WTC11 (cell line): ENCODE measurements at regions of chr1 and their contacts with region 1.

Region 1: GRCh38 chr1:182781841-182782586 is 7.6 kb upstream of the NPL start:
- DNase-seq: peak; percentile 79
- ATAC-seq: peak; percentile 79
- H3K4me3 Mint-ChIP-seq: no peak overlapping the region
- H3K27ac Mint-ChIP-seq: no peak overlapping the region
- H3K4me1 Mint-ChIP-seq: peaks cover 18% of the 10 kb centered on the region
- H3K27me3 Mint-ChIP-seq: peaks cover 4% of the 10 kb centered on the region
- CTCF ChIP-seq: peak; percentile 63

Region 2: GRCh38 chr1:182614796-182615454 is 167.1 kb before region 1 on chr1:
- CTCF ChIA-PET with region 1: interaction called, 84 read pairs
- POLR2A ChIA-PET with region 1: interaction called, 6 read pairs
- DNase-seq: peak; percentile 55
- ATAC-seq: peak; percentile 24
- H3K4me3 Mint-ChIP-seq: peak overlapping the region; percentile 71
- H3K27ac Mint-ChIP-seq: peak overlapping the region; percentile 86
- H3K4me1 Mint-ChIP-seq: peaks cover 81% of the 10 kb centered on the region
- H3K27me3 Mint-ChIP-seq: peaks cover 67% of the 10 kb centered on the region
- CTCF ChIP-seq: no peak

Region 3: DNA sequence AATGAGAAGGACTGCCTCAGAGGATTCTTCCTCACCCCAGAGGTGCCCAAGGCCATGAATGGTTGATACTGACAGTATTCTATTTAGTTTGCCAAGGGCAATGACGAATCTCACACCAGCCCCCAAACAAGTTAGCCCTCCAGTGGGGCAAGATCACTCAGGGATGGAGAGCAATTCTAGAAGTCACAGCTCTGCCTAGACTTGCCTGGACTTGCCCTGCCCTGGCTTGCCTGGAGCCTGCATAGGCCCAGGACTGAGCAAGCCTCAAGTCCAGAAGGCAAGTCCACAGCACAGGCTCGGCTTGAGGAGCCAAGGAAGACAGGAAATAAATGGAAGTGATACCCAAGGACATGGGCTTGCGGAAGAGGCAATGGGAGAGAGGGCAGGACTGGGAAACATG is 138.3 kb before region 1 on chr1:
- CTCF ChIA-PET with region 1: interaction called, 10 read pairs
- POLR2A ChIA-PET with region 1: no interaction called
- DNase-seq: no peak
- ATAC-seq: no peak
- H3K4me3 Mint-ChIP-seq: no peak overlapping the region
- H3K27ac Mint-ChIP-seq: peak overlapping the region; percentile 47; the same call in 1 of the 2 replicates
- H3K4me1 Mint-ChIP-seq: no peaks in the 10 kb centered on the region
- H3K27me3 Mint-ChIP-seq: no peaks in the 10 kb centered on the region; the same call in 1 of the 2 replicates
- CTCF ChIP-seq: no peak

Region 4: DNA sequence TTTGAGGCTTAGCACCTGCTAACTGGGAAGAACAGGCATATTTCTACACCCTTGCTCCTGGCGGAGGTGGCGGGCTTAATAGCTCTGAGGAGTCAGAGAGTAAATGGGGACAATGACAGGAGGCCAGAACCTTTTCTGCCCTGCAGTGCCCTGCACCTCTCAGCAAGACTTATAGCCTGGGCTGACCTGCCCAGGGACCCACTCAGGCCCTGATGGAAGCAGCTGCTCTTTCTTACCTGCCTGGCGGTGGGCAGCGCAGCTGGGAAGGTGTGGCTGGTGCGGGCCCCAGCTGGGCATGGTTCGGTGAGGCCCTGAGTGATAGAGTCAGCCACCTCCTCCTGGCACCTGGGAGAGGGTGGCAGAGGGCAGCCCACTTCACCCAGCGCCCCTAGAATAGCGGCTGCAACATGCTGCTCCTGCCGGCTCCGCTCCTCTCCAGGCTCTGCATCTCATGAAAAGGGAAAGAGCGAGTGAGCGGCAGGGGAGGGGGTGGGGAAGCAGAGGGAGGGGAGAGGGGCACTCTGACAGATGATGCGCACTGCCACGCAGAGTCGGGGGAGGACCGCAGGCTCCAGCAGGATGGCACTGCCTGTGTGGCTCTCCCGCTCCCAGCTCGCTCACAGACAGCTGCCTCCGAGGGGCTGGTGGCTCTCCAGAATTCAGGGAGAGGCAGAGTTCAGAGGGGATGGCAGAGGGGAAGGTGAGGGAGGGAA is 97.7 kb before region 1 on chr1 and contains the start of gene RGS8:
- CTCF ChIA-PET with region 1: interaction called, 13 read pairs
- POLR2A ChIA-PET with region 1: interaction called, 3 read pairs
- DNase-seq: no peak
- ATAC-seq: peak; percentile 77
- H3K4me3 Mint-ChIP-seq: no peak within 1 kb of the TSS
- H3K27ac Mint-ChIP-seq: no peak within 1 kb of the TSS
- H3K4me1 Mint-ChIP-seq: peaks cover 4% of the 10 kb centered on the region
- H3K27me3 Mint-ChIP-seq: peaks cover 19% of the 10 kb centered on the region
- CTCF ChIP-seq: no peak
- total RNA-seq, gene RGS8: 0.07 to 0.66 TPM (median 0.14 TPM) in 3 replicates

Region 5: DNA sequence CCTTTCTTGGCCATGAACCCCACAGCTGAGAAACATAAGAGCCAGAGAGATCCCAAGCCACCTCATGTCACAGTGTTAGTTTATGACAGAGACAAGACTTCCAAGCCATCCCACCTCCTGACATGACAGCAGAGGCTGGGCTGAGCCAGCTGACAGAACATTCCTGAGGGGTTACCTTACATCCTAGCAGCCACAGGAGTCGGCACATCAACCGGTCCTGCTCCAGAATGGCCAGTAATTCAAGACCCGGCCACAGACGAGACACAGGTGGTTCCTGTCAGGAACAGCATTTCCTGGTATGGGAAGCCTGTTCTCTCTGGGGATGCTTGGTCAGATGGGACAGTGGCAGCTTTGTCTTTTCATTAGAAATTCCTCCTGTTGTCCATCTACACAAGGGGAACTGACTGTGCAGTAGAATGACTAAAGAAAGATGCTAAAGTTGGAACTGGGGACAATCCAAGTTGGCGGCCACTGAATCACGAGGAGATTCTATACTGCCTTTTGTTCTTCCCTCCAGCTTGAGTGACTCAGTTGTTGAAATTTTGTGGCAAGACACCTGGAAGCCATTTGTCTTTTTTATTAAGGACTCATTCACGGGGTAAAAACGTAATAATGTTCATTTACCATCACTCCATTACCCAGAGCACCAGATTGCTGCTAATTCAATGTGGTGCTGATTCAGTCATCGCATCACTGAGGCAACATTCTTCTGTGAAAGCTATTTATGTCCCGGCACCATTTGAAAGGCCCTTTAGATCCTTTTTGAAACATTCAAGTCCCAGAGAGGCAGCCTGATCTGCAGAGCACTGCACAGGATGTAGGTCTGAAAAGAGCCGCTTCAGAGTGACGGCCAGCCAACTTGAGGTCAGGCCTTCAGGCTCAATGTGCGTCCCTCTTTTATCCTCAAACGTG is 29.7 kb before region 1 on chr1:
- CTCF ChIA-PET with region 1: interaction called, 27 read pairs
- POLR2A ChIA-PET with region 1: no interaction called
- DNase-seq: peak; percentile 13
- ATAC-seq: peak; percentile 47; the same call in 1 of the 2 replicates
- H3K4me3 Mint-ChIP-seq: no peak overlapping the region
- H3K27ac Mint-ChIP-seq: no peak overlapping the region
- H3K4me1 Mint-ChIP-seq: peaks cover 8% of the 10 kb centered on the region; the same call in 1 of the 2 replicates
- H3K27me3 Mint-ChIP-seq: no peaks in the 10 kb centered on the region; the same call in 1 of the 2 replicates
- CTCF ChIP-seq: no peak

Region 6: DNA sequence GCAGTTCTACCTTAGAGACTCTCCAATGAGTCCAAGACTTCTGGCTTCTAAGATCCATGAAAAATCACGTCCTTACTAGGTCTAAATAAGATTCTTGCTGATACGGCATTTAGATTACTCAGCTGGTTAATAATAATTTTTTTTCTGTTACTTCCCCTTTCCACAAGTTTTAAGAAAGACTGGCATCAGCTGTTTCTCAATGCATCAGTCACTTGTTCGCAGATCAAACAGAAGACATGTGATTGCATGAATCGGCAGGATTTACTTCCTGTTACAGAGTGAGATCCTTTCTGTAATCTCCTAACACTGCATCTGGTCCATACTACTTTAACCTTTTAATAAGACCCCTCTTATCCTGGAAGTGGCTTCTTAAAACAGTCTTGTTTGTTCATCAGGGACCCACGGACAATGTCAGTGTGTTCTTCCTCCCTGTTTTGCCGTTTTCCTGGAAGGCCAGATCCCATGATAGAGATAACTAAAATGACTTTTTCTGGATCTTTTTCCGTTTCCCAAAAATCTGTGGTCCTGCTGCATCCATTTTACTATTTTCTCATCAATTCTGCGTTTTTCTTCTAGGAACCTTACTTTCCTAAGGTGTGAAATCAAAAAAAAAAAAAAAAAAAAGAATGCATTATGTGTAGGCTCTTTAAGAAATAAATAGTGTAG is 13.7 kb after region 1 on chr1:
- CTCF ChIA-PET with region 1: interaction called, 11 read pairs
- POLR2A ChIA-PET with region 1: no interaction called
- DNase-seq: no peak
- ATAC-seq: no peak
- H3K4me3 Mint-ChIP-seq: no peak overlapping the region
- H3K27ac Mint-ChIP-seq: no peak overlapping the region
- H3K4me1 Mint-ChIP-seq: peaks cover 10% of the 10 kb centered on the region
- H3K27me3 Mint-ChIP-seq: peaks cover 24% of the 10 kb centered on the region
- CTCF ChIP-seq: no peak

Region 7: DNA sequence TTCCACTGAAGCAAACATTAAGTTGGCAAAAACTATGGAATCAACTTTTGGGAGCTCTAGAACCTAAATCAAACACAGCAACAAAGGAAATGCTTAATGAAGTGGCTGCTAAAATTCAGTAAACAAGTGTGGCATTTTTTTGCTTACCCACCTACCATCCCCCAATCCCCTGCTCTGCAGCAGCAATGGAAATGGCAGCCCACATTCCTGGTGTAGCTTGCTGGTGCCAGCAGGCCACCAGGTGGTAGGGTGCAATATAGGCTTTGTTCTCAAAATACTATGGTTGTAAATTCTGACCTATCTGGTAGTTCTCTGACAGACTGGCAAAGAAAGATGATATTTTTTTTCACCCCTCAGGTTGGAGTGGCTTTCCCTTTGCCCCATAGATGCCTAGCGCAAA is 128.1 kb after region 1 on chr1:
- CTCF ChIA-PET with region 1: no interaction called
- POLR2A ChIA-PET with region 1: no interaction called
- DNase-seq: peak; percentile 35
- ATAC-seq: peak; percentile 97
- H3K4me3 Mint-ChIP-seq: no peak overlapping the region
- H3K27ac Mint-ChIP-seq: peak overlapping the region; percentile 69
- H3K4me1 Mint-ChIP-seq: peaks cover 12% of the 10 kb centered on the region
- H3K27me3 Mint-ChIP-seq: no peaks in the 10 kb centered on the region
- CTCF ChIP-seq: no peak